ENCODE measurements at regions of chr1 and their contacts with region 1.

Region 1: DNA sequence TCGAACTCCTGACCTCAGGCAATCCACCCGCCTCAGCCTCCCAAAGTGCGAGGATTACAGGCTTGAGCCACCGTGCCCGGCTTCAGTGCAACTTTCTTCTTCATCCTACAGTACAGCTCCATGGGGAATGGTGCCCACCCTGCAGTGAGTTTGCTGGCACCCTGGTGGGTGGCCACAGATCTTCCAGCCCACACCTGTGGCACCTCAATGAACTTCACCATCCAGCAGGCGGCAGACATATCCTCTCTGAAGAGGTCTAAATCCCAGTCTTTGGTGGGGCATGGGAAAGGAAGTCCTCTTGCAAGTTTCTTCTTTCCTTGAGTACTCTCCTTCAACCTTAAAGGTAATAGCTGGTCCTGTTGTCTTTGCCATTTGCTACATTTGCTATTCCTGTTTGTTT is 18.1 kb upstream of the ZBTB8A start:
- DNase-seq: no peak
- ATAC-seq: peak; percentile 14
- H3K4me3 ChIP-seq: peak overlapping the region; percentile 50; the same call in 1 of the 2 replicates
- H3K27ac ChIP-seq: no peak overlapping the region
- H3K4me1 ChIP-seq: peaks cover 9% of the 10 kb centered on the region
- H3K27me3 ChIP-seq: no peaks in the 10 kb centered on the region
- CTCF ChIP-seq: 0 out of 6 replicates have a peak, but pooled peaks of 1 of the 3 experiments have one; percentile 14
- EP300 ChIP-seq: no peak
- POLR2A ChIP-seq: no peak
- RAD21 ChIP-seq: 0 out of 2 replicates have a peak, but pooled peaks have one; percentile 29

Region 2: DNA sequence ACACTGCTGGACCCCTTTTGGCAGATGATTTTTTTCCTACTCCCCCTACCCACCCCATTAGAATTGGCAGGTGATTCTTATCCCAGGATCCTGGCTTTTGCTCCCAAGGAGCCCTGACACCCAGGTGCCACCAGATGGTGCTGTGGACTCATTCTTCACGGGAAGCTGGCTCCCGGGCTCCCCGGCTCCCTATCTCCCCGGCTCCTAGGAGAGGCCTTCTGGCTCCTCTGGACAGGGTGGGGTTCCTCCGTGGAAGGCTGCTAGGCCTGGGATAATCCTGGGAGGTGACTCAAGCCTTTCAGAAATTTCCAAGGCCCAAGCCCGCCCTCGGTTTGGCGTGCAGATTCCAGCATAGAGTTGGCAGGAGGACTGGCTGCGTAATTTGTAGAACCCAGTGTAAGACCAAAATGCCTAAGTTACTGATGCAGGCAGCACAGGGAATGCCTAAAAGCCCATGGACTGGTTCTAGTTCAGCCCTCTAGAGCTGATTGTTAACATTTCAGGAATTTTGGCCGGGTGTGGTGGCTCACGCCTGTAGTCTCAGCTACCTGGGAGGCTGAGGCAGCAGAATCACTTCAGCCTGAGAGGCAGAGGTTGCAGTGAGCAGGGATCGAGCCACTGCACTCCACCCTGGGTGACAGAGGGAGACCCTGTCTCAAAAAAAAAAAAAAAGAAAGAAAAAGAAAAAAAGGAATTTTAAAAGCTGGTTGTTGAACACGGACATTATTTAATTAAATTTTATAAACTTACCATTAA is 120.1 kb before region 1 on chr1:
- CTCF ChIA-PET with region 1: interaction called, 14 read pairs
- POLR2A ChIA-PET with region 1: interaction called, 6 read pairs
- RAD21 ChIA-PET with region 1: interaction called, 6 read pairs
- SMC1A ChIA-PET with region 1: interaction called, 4 read pairs
- in situ Hi-C with region 1: no loop called
- intact Hi-C with region 1: no loop called
- DNase-seq: no peak
- ATAC-seq: peak; percentile 95
- H3K4me3 ChIP-seq: no peak overlapping the region
- H3K27ac ChIP-seq: no peak overlapping the region
- H3K4me1 ChIP-seq: no peaks in the 10 kb centered on the region
- H3K27me3 ChIP-seq: no peaks in the 10 kb centered on the region
- CTCF ChIP-seq: peak; percentile 87 to 94 (median 88)
- EP300 ChIP-seq: no peak
- POLR2A ChIP-seq: no peak
- RAD21 ChIP-seq: peak; percentile 81

Region 3: DNA sequence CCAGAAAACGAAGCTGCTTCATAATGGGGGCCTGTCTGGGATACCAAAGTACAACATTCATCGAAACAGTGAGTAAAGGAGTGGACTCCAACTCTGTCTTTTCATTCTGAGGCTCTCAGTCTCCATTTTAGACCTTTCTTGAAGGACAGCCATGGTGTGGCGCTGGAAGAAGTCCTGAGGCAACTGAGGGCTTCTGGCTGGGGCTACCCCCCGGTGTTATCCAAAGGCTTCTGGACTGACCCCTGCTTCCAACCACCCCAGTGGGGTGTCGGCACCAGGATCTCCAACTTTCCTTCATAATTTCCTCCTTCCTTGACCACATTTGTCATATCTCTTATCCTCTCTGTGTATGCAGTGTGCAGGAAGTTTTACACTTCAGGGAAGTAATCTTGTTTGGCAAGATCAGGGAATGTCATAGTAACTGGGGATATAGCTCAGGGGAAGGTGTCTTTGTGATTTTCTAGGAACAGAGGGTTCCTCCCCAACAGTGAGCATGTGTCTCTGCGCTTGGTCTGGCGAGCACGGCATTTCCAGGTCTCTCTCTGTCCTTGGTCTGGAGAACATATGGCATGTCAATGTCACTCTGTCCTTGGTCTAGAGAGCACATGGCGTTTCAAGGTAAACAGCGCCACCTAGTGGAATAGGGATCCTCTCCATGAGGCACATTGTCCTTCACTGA is 107.5 kb before region 1 on chr1:
- CTCF ChIA-PET with region 1: no interaction called
- POLR2A ChIA-PET with region 1: no interaction called
- RAD21 ChIA-PET with region 1: no interaction called
- SMC1A ChIA-PET with region 1: no interaction called
- in situ Hi-C with region 1: no loop called
- intact Hi-C with region 1: no loop called
- DNase-seq: peak; percentile 48
- ATAC-seq: peak; percentile 99
- H3K4me3 ChIP-seq: no peak overlapping the region
- H3K27ac ChIP-seq: no peak overlapping the region
- H3K4me1 ChIP-seq: no peaks in the 10 kb centered on the region; the same call in 1 of the 2 replicates
- H3K27me3 ChIP-seq: no peaks in the 10 kb centered on the region; a peak in 1 of 4 replicates
- CTCF ChIP-seq: peak; percentile 76 to 82 (median 78)
- EP300 ChIP-seq: no peak
- POLR2A ChIP-seq: no peak
- RAD21 ChIP-seq: peak; percentile 86

Region 4: GRCh38 chr1:32619701-32620485 is 98.7 kb after region 1 on chr1:
- CTCF ChIA-PET with region 1: interaction called, 38 read pairs
- POLR2A ChIA-PET with region 1: interaction called, 3 read pairs
- RAD21 ChIA-PET with region 1: interaction called, 20 read pairs
- SMC1A ChIA-PET with region 1: interaction called, 19 read pairs
- in situ Hi-C with region 1: no loop called
- intact Hi-C with region 1: loop called (anchors 1 kb)
- DNase-seq: peak; percentile 72
- ATAC-seq: peak; percentile 90
- H3K4me3 ChIP-seq: peak overlapping the region; percentile 12; the same call in 1 of the 2 replicates
- H3K27ac ChIP-seq: peak overlapping the region; percentile 80
- H3K4me1 ChIP-seq: peaks cover 39% of the 10 kb centered on the region
- H3K27me3 ChIP-seq: no peaks in the 10 kb centered on the region
- CTCF ChIP-seq: peak in 2 of 3 experiments; percentile 26 to 29; a peak in 2 of 6 replicates
- EP300 ChIP-seq: peak; percentile 55 to 70; a peak in 3 of 4 replicates
- POLR2A ChIP-seq: no peak
- RAD21 ChIP-seq: peak; percentile 42

Region 5: GRCh38 chr1:32702599-32703478 is 181.7 kb after region 1 on chr1 and contains the start of gene SYNC:
- CTCF ChIA-PET with region 1: interaction called, 14 read pairs
- POLR2A ChIA-PET with region 1: no interaction called
- RAD21 ChIA-PET with region 1: interaction called, 15 read pairs
- SMC1A ChIA-PET with region 1: interaction called, 12 read pairs
- in situ Hi-C with region 1: no loop called
- intact Hi-C with region 1: no loop called
- DNase-seq: no peak
- ATAC-seq: peak; percentile 75
- H3K4me3 ChIP-seq: peak within 1 kb of the TSS; percentile 11; the same call in 1 of the 2 replicates
- H3K27ac ChIP-seq: no peak within 1 kb of the TSS
- H3K4me1 ChIP-seq: no peaks in the 10 kb centered on the region
- H3K27me3 ChIP-seq: peaks cover 6 to 13% of the 10 kb centered on the region in 2 experiments; a peak in 3 of 4 replicates
- CTCF ChIP-seq: no peak
- EP300 ChIP-seq: no peak
- POLR2A ChIP-seq: no peak
- RAD21 ChIP-seq: no peak
- polyA plus RNA-seq, gene SYNC: not detected

Region 6: GRCh38 chr1:32870615-32871363 is 349.6 kb after region 1 on chr1 and contains the start of gene FNDC5:
- CTCF ChIA-PET with region 1: interaction called, 13 read pairs
- POLR2A ChIA-PET with region 1: no interaction called
- RAD21 ChIA-PET with region 1: interaction called, 14 read pairs
- SMC1A ChIA-PET with region 1: interaction called, 12 read pairs
- in situ Hi-C with region 1: no loop called
- intact Hi-C with region 1: loop called (anchors 10 kb)
- DNase-seq: no peak
- ATAC-seq: peak; percentile 21; the same call in 1 of the 3 replicates
- H3K4me3 ChIP-seq: no peak within 1 kb of the TSS
- H3K27ac ChIP-seq: no peak within 1 kb of the TSS
- H3K4me1 ChIP-seq: peaks cover 4% of the 10 kb centered on the region
- H3K27me3 ChIP-seq: peaks cover 9 to 12% of the 10 kb centered on the region in 2 experiments; a peak in 3 of 4 replicates
- CTCF ChIP-seq: no peak
- EP300 ChIP-seq: no peak
- POLR2A ChIP-seq: no peak
- RAD21 ChIP-seq: no peak
- polyA plus RNA-seq, gene FNDC5: 0.14 to 0.26 TPM

Region 7: GRCh38 chr1:33047839-33048305 is 526.7 kb after region 1 on chr1:
- CTCF ChIA-PET with region 1: no interaction called
- POLR2A ChIA-PET with region 1: no interaction called
- RAD21 ChIA-PET with region 1: no interaction called
- SMC1A ChIA-PET with region 1: no interaction called
- in situ Hi-C with region 1: no loop called
- intact Hi-C with region 1: no loop called
- DNase-seq: no peak
- ATAC-seq: no peak
- H3K4me3 ChIP-seq: no peak overlapping the region
- H3K27ac ChIP-seq: no peak overlapping the region
- H3K4me1 ChIP-seq: no peaks in the 10 kb centered on the region
- H3K27me3 ChIP-seq: no peaks in the 10 kb centered on the region; a peak in 1 of 4 replicates
- CTCF ChIP-seq: no peak
- EP300 ChIP-seq: no peak
- POLR2A ChIP-seq: no peak
- RAD21 ChIP-seq: no peak